Activated CD4-positive, alpha-beta memory T cell treated with anti-CD3 and anti-CD28 coated beads for 36 hours (primary cell): ENCODE measurements at regions of chr11 and their contacts with region 1.

Region 1: DNA sequence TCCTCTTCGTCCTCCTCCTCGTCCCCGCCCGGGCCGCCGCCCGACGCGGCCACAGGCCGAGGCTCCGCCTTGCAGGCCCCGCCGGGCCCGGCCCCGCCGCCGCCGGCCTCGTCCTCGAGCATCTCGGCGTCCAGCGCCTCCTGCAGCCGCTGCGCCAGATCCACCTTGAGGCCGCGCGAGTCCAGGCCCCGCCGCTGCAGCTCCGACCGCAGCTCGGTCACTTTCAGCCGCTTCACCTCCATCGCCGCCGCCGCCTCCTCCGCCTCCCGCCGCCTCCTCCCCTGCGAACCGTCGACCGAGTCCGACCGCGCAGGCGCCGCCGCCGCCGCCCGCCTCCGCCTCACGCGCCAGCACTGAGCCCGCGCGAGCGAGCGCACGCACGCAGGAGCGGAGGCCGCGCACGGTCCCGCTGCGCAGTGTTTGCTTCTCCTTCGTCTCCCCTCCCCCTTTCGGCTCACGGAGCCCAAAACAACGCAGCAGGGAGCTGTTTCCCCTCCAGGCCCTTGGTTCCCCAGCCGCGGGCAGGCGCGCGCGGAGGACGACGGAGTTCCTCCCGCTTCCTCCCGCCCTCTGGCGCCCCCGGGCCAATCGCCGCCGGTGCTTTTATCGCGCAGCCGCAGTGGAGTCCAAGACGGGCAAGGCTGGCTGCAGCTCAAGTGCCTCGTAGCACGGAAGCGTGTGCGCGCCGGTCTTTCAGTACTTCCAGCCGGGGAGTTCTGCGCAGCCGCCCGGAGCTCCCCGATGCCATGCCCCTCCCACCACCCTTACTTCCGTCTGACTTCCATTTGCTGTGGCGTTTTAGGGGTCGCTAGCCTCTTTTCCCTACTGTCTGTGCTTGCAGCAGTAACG is at the start of gene HNRNPUL2:
- DNase-seq: peak; percentile 99
- H3K4me3 Mint-ChIP-seq: peak within 1 kb of the TSS; percentile 99
- H3K27ac Mint-ChIP-seq: peak within 1 kb of the TSS; percentile 93
- H3K4me1 Mint-ChIP-seq: peaks cover 44% of the 10 kb centered on the region
- H3K27me3 Mint-ChIP-seq: no peaks in the 10 kb centered on the region
- total RNA-seq, gene HNRNPUL2: 56.0 to 62.3 TPM

Region 2: GRCh38 chr11:62671575-62672389 is 55.4 kb before region 1 on chr11 and contains the starts of genes LBHD1 and UQCC3:
- CTCF ChIA-PET with region 1: interaction called, 8 read pairs
- POLR2A ChIA-PET with region 1: interaction called, 11 read pairs
- intact Hi-C with region 1: loop called (anchors 2 kb)
- DNase-seq: peak; percentile 93
- H3K4me3 Mint-ChIP-seq: peak within 1 kb of the TSS; percentile 94
- H3K27ac Mint-ChIP-seq: peak within 1 kb of the TSS; percentile 98
- H3K4me1 Mint-ChIP-seq: peaks cover 55% of the 10 kb centered on the region
- H3K27me3 Mint-ChIP-seq: no peaks in the 10 kb centered on the region
- total RNA-seq, gene LBHD1: 10.8 to 14.1 TPM
- total RNA-seq, gene UQCC3: 6.0 to 6.2 TPM

Region 3: DNA sequence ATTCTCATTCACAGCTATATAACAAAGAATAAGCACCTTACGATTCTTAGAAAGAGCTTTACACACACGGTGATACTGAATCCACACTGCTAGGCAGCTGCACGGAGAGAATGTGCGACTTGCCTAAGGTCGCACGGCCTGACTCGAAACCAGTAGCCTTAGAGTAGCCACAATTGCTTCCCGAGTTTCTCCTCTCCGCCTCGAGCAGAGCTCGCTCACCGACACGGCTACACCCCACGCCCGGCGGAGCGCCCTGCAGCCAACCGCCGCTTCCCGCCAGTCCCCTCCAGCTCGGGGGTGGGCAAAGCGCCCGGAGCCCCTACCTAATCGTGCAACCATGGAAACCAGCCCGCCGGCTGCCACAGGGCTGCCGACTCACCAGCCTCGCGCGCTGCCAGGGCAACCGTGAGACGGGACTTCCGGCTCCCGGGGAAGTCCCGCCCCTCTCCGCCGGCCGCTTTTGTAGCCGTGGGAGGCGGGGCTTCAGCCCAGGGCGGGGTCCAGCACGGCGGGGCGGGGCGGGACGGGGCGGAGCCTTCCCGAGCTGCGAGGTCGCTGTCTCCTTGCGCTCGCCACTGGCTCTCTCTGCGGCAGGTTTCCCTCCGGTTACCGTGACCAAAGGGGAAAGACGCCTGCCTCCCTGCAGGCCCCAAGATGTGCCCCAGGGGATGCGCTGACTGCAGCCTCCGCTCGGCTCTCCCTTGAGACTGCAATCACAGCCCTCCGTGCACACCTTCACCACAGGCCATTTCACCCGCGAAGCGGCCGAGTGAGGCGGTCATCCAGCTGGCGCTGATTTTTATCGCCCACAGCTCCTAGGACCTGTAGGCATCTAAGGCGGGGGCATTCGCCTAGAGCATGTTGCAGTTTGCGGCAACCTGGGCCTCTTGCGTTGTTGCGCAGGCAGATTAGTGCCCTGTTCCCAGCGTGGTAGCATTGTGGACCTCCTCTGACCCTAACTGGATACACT is 21.0 kb before region 1 on chr11:
- CTCF ChIA-PET with region 1: interaction called, 9 read pairs
- POLR2A ChIA-PET with region 1: interaction called, 18 read pairs
- intact Hi-C with region 1: loop called (anchors 1 kb)
- DNase-seq: peak; percentile 96
- H3K4me3 Mint-ChIP-seq: peak overlapping the region; percentile 85
- H3K27ac Mint-ChIP-seq: peak overlapping the region; percentile 70
- H3K4me1 Mint-ChIP-seq: peaks cover 50% of the 10 kb centered on the region
- H3K27me3 Mint-ChIP-seq: no peaks in the 10 kb centered on the region

Region 4: GRCh38 chr11:62771144-62772021 is 44.2 kb after region 1 on chr11 and contains the start of gene TAF6L:
- CTCF ChIA-PET with region 1: no interaction called
- POLR2A ChIA-PET with region 1: interaction called, 5 read pairs
- intact Hi-C with region 1: loop called (anchors 1 kb)
- DNase-seq: peak; percentile 98
- H3K4me3 Mint-ChIP-seq: peak within 1 kb of the TSS; percentile 79
- H3K27ac Mint-ChIP-seq: peak within 1 kb of the TSS; percentile 94
- H3K4me1 Mint-ChIP-seq: peaks cover 24% of the 10 kb centered on the region
- H3K27me3 Mint-ChIP-seq: no peaks in the 10 kb centered on the region
- total RNA-seq, gene TAF6L: 11.9 to 12.0 TPM

Region 5: GRCh38 chr11:62796281-62796680 is 69.1 kb after region 1 on chr11:
- CTCF ChIA-PET with region 1: no interaction called
- POLR2A ChIA-PET with region 1: no interaction called
- intact Hi-C with region 1: no loop called
- DNase-seq: no peak
- H3K4me3 Mint-ChIP-seq: no peak overlapping the region
- H3K27ac Mint-ChIP-seq: peak overlapping the region; percentile 8
- H3K4me1 Mint-ChIP-seq: peaks cover 9% of the 10 kb centered on the region
- H3K27me3 Mint-ChIP-seq: no peaks in the 10 kb centered on the region

Region 6: GRCh38 chr11:62958547-62959421 is 231.6 kb after region 1 on chr11:
- CTCF ChIA-PET with region 1: no interaction called
- POLR2A ChIA-PET with region 1: no interaction called
- intact Hi-C with region 1: no loop called
- DNase-seq: no peak
- H3K4me3 Mint-ChIP-seq: no peak overlapping the region
- H3K27ac Mint-ChIP-seq: no peak overlapping the region
- H3K4me1 Mint-ChIP-seq: no peaks in the 10 kb centered on the region
- H3K27me3 Mint-ChIP-seq: peaks cover 5% of the 10 kb centered on the region